Activated CD4-positive, alpha-beta T cell treated with anti-CD3 and anti-CD28 coated beads for 36 hours (primary cell): ENCODE measurements at regions of chr1 and their contacts with region 1.

Region 1: GRCh38 chr1:199684686-199685273 is 342.7 kb upstream of the NR5A2 start:
- DNase-seq: peak; percentile 29
- ATAC-seq: peak; percentile 39
- H3K4me3 Mint-ChIP-seq: no peak overlapping the region
- H3K27ac Mint-ChIP-seq: no peak overlapping the region
- H3K4me1 Mint-ChIP-seq: no peaks in the 10 kb centered on the region
- H3K27me3 Mint-ChIP-seq: peaks cover 8% of the 10 kb centered on the region

Region 2: DNA sequence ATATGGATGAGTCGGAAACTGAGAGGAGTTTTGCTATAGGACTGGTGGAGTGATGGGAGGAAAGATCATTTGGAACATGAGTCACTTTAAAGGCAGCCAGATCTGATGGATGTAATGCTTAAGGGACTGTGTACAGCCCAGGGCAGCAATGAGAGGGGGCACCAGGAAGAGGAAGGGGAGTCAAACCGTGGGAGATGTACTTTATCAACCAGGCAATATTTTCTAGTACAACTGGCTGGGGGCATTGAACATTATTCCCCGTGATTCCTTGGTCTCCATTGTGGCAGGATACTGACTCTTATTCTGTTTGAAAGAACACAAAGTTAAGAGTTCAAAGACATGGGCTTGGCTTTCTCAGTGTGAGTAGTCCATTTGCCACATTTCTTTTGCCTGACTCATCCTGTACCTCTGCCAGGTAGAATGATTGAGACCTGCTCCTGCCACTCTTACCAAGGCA is 74.5 kb after region 1 on chr1:
- CTCF ChIA-PET with region 1: no interaction called
- POLR2A ChIA-PET with region 1: no interaction called
- intact Hi-C with region 1: no loop called
- DNase-seq: no peak
- ATAC-seq: no peak
- H3K4me3 Mint-ChIP-seq: no peak overlapping the region
- H3K27ac Mint-ChIP-seq: no peak overlapping the region
- H3K4me1 Mint-ChIP-seq: no peaks in the 10 kb centered on the region
- H3K27me3 Mint-ChIP-seq: peaks cover 20% of the 10 kb centered on the region

Region 3: DNA sequence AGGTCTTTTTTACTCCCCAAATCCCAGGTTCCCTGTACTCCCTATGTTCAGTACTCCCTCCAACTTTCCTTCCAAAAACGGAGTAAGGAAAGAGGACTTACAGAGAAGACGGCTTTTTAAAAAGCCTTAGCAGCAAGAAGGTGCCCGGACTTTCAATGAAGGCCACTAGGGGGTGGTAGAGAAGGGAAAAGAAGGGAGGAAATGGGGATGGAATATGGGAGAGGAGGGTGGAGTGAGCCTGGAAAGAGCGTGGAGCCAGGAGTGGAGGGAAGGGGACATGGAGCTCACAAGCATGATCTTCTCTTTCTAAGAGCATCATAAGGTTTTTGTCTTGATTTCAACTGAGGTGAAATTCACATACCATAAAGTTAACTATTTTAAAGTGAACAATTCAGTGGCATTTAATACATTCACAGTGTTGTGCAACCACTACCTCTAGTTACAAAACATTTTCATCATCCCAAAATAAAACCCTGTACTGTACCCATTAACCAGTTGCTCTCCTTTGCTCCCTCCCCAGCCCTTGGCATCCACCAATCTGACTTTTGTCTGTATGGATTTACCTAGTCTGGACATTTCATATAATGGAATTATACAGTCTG is 595.1 kb after region 1 on chr1:
- CTCF ChIA-PET with region 1: no interaction called
- POLR2A ChIA-PET with region 1: no interaction called
- intact Hi-C with region 1: loop called in 1 of 2 experiments (anchors 1 kb)
- DNase-seq: peak; percentile 51
- ATAC-seq: no peak
- H3K4me3 Mint-ChIP-seq: no peak overlapping the region
- H3K27ac Mint-ChIP-seq: no peak overlapping the region
- H3K4me1 Mint-ChIP-seq: no peaks in the 10 kb centered on the region
- H3K27me3 Mint-ChIP-seq: no peaks in the 10 kb centered on the region

Region 4: GRCh38 chr1:200302192-200302920 is 617.6 kb after region 1 on chr1:
- CTCF ChIA-PET with region 1: interaction called, 4 read pairs
- POLR2A ChIA-PET with region 1: no interaction called
- intact Hi-C with region 1: loop called (anchors 1 to 5 kb)
- DNase-seq: peak; percentile 77
- ATAC-seq: peak; percentile 93
- H3K4me3 Mint-ChIP-seq: peak overlapping the region; percentile 73
- H3K27ac Mint-ChIP-seq: no peak overlapping the region
- H3K4me1 Mint-ChIP-seq: peaks cover 12% of the 10 kb centered on the region
- H3K27me3 Mint-ChIP-seq: no peaks in the 10 kb centered on the region